ENCODE measurements at regions of chr10 and their contacts with region 1.

Region 1: GRCh38 chr10:119803264-119803663 is 69.4 kb downstream of the MCMBP start:
- DNase-seq: no peak
- H3K4me3 ChIP-seq: no peak overlapping the region
- H3K27ac ChIP-seq: no peak overlapping the region
- H3K4me1 ChIP-seq: peaks cover 12% of the 10 kb centered on the region
- H3K27me3 ChIP-seq: no peaks in the 10 kb centered on the region
- CTCF ChIP-seq: no peak
- POLR2A ChIP-seq: no peak

Region 2: DNA sequence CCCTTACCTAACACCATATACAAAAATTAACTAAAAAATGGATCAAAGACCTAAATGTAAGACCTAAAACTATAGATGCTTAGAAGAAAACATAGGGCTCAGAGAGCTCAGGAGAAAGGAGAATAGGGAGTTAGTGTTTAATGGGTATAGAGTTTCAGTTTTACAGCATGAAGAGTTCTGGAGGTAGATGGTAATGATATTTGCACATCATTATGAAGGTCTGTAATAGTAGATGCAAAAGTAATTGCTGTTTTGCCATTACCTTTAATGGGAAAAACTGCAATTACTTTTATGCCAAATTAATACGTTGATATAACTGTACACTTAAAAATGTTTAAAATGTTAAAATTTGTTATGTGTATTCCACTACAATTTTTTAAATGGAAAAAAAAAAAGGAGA is 812.9 kb before region 1 on chr10:
- CTCF ChIA-PET with region 1: no interaction called
- POLR2A ChIA-PET with region 1: no interaction called
- dilution Hi-C with region 1: no loop called
- intact Hi-C with region 1: no loop called
- DNase-seq: no peak
- H3K4me3 ChIP-seq: no peak overlapping the region
- H3K27ac ChIP-seq: no peak overlapping the region
- H3K4me1 ChIP-seq: no peaks in the 10 kb centered on the region
- H3K27me3 ChIP-seq: peaks cover 0 to 2% of the 10 kb centered on the region in 2 experiments
- CTCF ChIP-seq: no peak
- POLR2A ChIP-seq: no peak

Region 3: GRCh38 chr10:119784340-119785070 is 18.8 kb before region 1 on chr10:
- CTCF ChIA-PET with region 1: interaction called, 8 read pairs
- POLR2A ChIA-PET with region 1: no interaction called
- dilution Hi-C with region 1: no loop called
- intact Hi-C with region 1: loop called (anchors 2 kb)
- DNase-seq: no peak
- H3K4me3 ChIP-seq: no peak overlapping the region
- H3K27ac ChIP-seq: no peak overlapping the region
- H3K4me1 ChIP-seq: peaks cover 24% of the 10 kb centered on the region
- H3K27me3 ChIP-seq: no peaks in the 10 kb centered on the region
- CTCF ChIP-seq: no peak
- POLR2A ChIP-seq: no peak